HCT116 (cell line): ENCODE measurements at regions of chr14 and their contacts with region 1.

Region 1: DNA sequence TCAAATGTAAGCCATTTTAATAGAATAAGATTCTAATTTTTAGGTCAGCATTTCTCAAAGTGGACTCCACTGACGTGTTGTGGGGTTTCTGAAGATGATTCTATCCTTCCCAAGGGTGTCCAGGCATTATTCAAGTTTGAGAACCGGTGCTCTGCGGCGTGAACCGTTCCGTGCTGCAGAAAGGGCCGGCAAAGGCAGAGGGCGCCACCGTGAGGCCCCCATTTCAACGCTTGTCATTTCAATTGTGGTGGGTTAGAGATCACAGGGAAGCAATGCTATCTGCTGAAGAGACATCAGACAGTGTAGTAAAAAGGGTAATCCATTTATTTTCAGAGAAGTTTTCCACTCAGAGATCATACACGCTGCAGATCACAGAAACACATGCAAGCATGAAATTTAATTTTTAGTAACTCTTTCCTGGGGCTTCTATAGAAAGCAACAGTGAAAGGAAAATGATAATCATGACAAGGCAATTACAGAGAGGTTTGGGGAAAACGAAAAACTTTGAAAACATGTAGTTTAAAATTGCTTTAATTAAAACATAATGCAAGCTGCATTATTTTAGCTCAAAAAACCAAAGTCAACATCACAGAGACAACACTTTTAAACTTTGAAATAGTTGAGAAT is 201.7 kb downstream of the EXOC5 start:
- DNase-seq: peak; percentile 12
- ATAC-seq: peak; percentile 98
- H3K4me3 ChIP-seq: no peak overlapping the region
- H3K27ac ChIP-seq: no peak overlapping the region
- H3K4me1 ChIP-seq: no peaks in the 10 kb centered on the region
- H3K27me3 ChIP-seq: peaks cover 4% of the 10 kb centered on the region
- CTCF ChIP-seq: peak; percentile 59 to 91 (median 79)
- POLR2A ChIP-seq: no peak
- RAD21 ChIP-seq: peak; percentile 80

Region 2: DNA sequence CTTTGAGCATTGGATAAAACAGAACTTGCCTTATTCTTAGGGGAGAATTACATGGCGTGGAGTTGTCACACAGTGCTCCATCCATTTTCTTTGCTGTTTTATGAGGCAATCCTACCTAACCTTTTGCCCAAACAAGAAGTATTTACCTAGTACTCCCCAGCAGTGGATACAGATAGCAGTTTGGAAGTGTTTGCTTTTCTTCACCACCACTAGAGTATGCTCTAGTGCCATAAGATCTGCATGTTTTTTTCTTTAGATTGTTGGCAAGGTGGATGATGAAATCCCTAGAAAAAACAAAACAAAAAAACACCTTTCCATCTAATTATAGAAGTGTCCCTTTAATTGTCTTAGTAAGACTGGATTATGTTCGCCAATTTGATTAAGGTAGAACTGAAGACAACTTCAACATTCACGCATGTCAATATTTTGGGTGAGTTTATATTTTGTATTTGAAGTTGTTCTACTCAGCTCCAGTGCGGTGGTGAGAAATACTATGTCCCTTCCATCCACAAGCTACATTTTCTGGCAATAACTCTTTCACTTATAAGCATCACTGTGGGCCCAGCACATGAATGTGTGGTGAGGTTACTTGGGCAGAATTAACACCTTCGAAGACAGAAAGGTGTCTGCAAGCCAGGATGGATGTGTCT is 511.0 kb before region 1 on chr14:
- CTCF ChIA-PET with region 1: no interaction called
- POLR2A ChIA-PET with region 1: no interaction called
- RAD21 ChIA-PET with region 1: no interaction called
- intact Hi-C with region 1: loop called (anchors 5 kb)
- DNase-seq: peak; percentile 60
- ATAC-seq: peak; percentile 81
- H3K4me3 ChIP-seq: no peak overlapping the region
- H3K27ac ChIP-seq: no peak overlapping the region
- H3K4me1 ChIP-seq: no peaks in the 10 kb centered on the region
- H3K27me3 ChIP-seq: peaks cover 36% of the 10 kb centered on the region; the same call in 1 of the 2 replicates
- CTCF ChIP-seq: peak; percentile 65 to 70 (median 68)
- POLR2A ChIP-seq: no peak
- RAD21 ChIP-seq: peak; percentile 81

Region 3: DNA sequence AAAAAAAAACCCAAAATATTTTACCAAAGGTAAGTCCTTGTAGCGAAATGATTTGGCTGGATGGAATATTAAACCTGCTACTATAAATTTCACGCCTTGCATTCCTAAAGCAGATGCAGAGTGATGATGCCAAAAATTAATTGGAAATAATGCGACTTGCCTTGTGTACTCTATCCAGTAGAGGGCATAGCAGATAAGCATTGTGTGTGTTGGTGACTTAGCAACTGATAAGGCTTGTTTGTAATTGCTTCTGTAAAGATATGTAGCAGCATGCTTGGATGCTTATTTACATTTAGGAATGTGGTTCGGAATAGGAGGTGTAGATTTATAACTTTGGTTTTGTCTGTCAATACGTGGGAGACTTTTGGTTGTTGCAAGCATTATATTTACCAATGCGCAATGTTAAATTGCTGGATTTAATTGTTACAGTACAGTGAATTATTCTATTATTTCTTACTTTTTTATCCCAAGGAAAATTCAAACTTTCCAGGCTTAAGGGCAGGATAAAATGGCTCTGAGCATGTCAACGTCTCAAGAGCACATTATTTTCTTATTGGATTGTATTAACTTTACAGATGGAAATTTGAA is 406.9 kb before region 1 on chr14:
- CTCF ChIA-PET with region 1: no interaction called
- POLR2A ChIA-PET with region 1: no interaction called
- RAD21 ChIA-PET with region 1: no interaction called
- intact Hi-C with region 1: loop called (anchors 1 kb)
- DNase-seq: peak; percentile 32
- ATAC-seq: peak; percentile 86
- H3K4me3 ChIP-seq: no peak overlapping the region
- H3K27ac ChIP-seq: no peak overlapping the region
- H3K4me1 ChIP-seq: no peaks in the 10 kb centered on the region
- H3K27me3 ChIP-seq: no peaks in the 10 kb centered on the region
- CTCF ChIP-seq: peak; percentile 59 to 80 (median 70)
- POLR2A ChIP-seq: no peak
- RAD21 ChIP-seq: peak; percentile 75

Region 4: DNA sequence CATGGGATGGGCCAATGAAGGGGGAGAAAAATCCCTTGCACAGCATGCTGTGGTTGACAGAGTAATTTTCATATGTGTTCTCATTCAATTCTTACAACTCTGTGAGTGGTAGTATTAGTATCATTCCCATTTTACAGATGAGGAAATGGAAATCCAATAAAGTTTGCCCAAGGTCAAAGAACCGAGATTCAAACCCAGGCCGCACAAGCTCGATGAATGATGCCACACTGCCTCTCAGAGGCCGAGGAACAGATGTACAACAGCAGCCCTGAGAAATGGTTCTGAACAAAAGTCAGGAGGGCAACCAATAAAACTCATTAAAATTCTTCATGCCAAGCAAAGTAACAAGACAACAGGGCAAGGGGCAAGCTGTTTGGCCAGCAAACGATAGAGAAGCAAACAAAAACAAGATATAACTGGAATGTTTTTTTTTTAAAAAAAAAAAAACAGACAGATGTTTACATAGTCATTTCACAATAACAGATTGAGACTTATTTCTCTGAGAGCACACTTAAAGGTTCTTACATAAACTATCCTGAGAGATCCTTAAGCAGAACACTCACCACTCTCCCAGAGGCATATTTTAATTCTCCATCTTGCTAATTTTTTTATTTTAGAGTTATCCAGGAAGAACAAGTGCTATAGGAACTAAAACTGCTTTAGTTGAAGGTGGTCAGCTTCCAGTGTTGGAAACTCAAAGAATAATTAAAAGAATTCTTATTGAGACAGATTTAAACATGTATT is 115.9 kb after region 1 on chr14:
- CTCF ChIA-PET with region 1: no interaction called
- POLR2A ChIA-PET with region 1: no interaction called
- RAD21 ChIA-PET with region 1: interaction called in 1 of 2 experiments, 4 read pairs
- intact Hi-C with region 1: loop called (anchors 5 kb)
- DNase-seq: peak; percentile 16
- ATAC-seq: peak; percentile 78
- H3K4me3 ChIP-seq: no peak overlapping the region
- H3K27ac ChIP-seq: no peak overlapping the region
- H3K4me1 ChIP-seq: no peaks in the 10 kb centered on the region
- H3K27me3 ChIP-seq: peaks cover 28% of the 10 kb centered on the region
- CTCF ChIP-seq: peak; percentile 63 to 75 (median 64)
- POLR2A ChIP-seq: no peak
- RAD21 ChIP-seq: peak; percentile 86

Region 5: DNA sequence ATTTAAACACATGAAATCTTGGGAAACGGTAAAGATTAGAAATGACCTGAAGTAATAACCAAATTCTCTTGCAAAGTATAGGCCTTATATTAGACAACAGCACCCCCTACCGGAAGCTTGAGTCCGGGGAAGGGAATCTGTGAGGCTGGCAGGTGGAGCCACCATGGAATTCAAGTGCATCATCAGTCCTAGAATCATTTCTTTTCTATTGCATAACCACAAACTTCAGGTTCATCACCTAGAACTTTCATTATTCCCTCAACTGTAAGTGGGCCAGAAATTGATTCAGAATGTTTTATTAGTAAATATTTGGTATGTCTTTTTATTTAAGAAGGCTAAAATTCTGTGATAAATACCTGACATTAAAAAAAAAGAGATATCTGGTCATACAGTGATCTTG is 250.3 kb after region 1 on chr14:
- CTCF ChIA-PET with region 1: interaction called, 3 read pairs
- POLR2A ChIA-PET with region 1: no interaction called
- RAD21 ChIA-PET with region 1: no interaction called
- intact Hi-C with region 1: loop called (anchors 2 kb)
- DNase-seq: peak; percentile 79
- ATAC-seq: peak; percentile 91
- H3K4me3 ChIP-seq: no peak overlapping the region
- H3K27ac ChIP-seq: no peak overlapping the region
- H3K4me1 ChIP-seq: no peaks in the 10 kb centered on the region
- H3K27me3 ChIP-seq: peaks cover 17% of the 10 kb centered on the region; the same call in 1 of the 2 replicates
- CTCF ChIP-seq: peak; percentile 76 to 89 (median 82)
- POLR2A ChIP-seq: no peak
- RAD21 ChIP-seq: peak; percentile 81